Activated T-helper 2 cell treated with anti-CD3 and anti-CD28 coated beads, Interferon-gamma antibody, Interleukin-2, Interleukin-4, amounts not matched to agents 10 μg/mL and 5 μg/mL and 100 μg/mL, durations not matched to agents 14 hours and 24 hours and 36 hours (primary cell): ENCODE measurements at regions of chrX and their contacts with region 1.

Region 1: GRCh38 chrX:78653118-78653822 is 5.9 kb downstream of the RTL3 start:
- DNase-seq: no peak
- H3K4me3 Mint-ChIP-seq: peak overlapping the region; percentile 70
- H3K27ac Mint-ChIP-seq: peak overlapping the region; percentile 88
- H3K4me1 Mint-ChIP-seq: peaks cover 28% of the 10 kb centered on the region
- H3K27me3 Mint-ChIP-seq: no peaks in the 10 kb centered on the region

Region 2: DNA sequence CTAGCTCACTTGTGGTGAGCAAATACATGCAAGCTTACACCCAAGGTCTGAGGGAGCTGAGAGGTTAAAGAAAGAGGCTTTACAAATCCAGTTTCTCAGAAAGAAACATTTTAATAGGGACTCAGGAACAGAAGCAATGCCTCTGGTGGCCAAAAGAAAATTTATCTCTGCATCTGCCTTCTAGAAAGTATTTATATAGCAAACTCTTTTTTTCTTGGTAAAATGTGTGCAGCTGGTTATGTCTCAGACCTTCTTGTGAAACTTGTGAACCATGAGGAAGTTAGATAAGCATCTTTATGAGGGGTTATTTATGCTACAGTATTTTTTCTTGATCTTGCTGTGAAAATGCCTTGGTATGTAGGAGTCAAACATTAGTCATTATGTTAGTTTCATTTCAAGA is 277.4 kb before region 1 on chrX:
- intact Hi-C with region 1: loop called (anchors 2 kb)
- DNase-seq: no peak
- H3K4me3 Mint-ChIP-seq: no peak overlapping the region
- H3K27ac Mint-ChIP-seq: peak overlapping the region; percentile 31
- H3K4me1 Mint-ChIP-seq: peaks cover 31% of the 10 kb centered on the region
- H3K27me3 Mint-ChIP-seq: no peaks in the 10 kb centered on the region

Region 3: DNA sequence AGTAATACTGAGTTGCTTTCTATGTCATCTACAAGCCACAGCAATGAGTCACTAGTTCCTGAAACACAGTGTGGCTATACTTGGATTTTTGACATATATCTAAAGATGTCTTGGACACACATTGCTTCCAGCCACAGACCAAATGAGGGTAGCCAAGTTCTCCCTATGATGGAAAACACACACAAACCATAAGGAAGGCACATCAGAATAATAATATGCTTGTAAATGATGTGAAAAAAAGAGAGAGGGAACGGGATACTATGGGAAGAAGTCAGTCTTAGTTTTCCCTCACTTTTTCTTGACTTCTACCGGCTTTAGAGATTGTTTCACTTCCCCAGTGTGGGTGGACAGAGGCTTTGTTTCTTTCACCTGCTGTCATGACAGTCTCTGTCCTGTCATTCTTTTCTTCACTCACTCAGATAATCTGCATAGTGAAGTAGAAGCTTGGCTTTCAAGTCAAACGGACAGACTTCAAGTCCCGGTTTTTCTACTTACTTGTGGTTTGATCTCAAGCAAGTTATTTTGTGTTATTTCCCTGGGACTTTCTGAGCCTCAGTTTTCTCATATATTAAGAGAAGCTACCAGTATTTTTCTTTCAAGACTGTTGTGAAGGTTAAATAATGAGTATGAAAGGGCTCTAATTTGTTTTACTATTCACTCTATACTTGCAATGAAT is 326.7 kb after region 1 on chrX:
- intact Hi-C with region 1: loop called (anchors 5 kb)
- DNase-seq: no peak
- H3K4me3 Mint-ChIP-seq: peak overlapping the region; percentile 69
- H3K27ac Mint-ChIP-seq: peak overlapping the region; percentile 100
- H3K4me1 Mint-ChIP-seq: peaks cover 22% of the 10 kb centered on the region
- H3K27me3 Mint-ChIP-seq: no peaks in the 10 kb centered on the region

Region 4: GRCh38 chrX:79146640-79147390 is 493.5 kb after region 1 on chrX:
- intact Hi-C with region 1: loop called (anchors 5 kb)
- DNase-seq: no peak
- H3K4me3 Mint-ChIP-seq: peak overlapping the region; percentile 92
- H3K27ac Mint-ChIP-seq: peak overlapping the region; percentile 89
- H3K4me1 Mint-ChIP-seq: peaks cover 48% of the 10 kb centered on the region
- H3K27me3 Mint-ChIP-seq: no peaks in the 10 kb centered on the region